Sigmoid colon (tissue), 7 donors: ENCODE measurements at regions of chr10 and their contacts with region 1.

Region 1: GRCh38 chr10:16436758-16437539 is at the start of gene PTER:
- DNase-seq: peak; percentile 97
- H3K4me3 ChIP-seq: peak within 1 kb of the TSS; percentile 51 to 67 (median 61)
- H3K27ac ChIP-seq: peak within 1 kb of the TSS; percentile 75 to 83 (median 79)
- H3K4me1 ChIP-seq: peaks cover 0 to 18% (median 11%) of the 10 kb centered on the region in 4 donors
- H3K27me3 ChIP-seq: no peaks in the 10 kb centered on the region
- CTCF ChIP-seq: no peak
- EP300 ChIP-seq: no peak
- POLR2A ChIP-seq: peak in 1 of 2 donors; percentile 56
- total RNA-seq, gene PTER: 6.1 to 14.3 (median 10.3) TPM

Region 2: DNA sequence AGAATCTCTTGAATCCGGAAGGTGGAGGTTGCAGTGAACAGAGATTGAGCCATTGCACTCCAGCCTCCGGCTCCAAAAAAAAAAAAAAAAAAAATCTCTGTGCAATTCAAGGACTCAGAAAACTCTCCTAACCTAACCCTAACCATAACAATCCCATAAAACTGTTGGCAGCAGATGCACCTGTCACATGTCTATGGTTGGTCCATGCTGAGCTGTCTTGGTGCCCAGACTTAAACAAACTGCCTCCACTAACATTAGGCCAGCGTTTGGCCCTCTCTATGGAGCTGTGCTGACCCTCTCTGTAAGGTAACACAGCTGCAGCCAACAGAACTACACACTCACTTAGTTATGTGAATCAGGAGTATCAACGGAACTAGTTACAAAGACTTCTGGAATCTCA is 132.6 kb before region 1 on chr10:
- intact Hi-C with region 1: loop called (anchors 5 kb)
- DNase-seq: peak; percentile 81
- H3K4me3 ChIP-seq: no peak overlapping the region
- H3K27ac ChIP-seq: no peak overlapping the region
- H3K4me1 ChIP-seq: peaks cover 0 to 8% (median 3%) of the 10 kb centered on the region in 4 donors
- H3K27me3 ChIP-seq: no peaks in the 10 kb centered on the region
- CTCF ChIP-seq: no peak
- EP300 ChIP-seq: no peak
- POLR2A ChIP-seq: no peak

Region 3: DNA sequence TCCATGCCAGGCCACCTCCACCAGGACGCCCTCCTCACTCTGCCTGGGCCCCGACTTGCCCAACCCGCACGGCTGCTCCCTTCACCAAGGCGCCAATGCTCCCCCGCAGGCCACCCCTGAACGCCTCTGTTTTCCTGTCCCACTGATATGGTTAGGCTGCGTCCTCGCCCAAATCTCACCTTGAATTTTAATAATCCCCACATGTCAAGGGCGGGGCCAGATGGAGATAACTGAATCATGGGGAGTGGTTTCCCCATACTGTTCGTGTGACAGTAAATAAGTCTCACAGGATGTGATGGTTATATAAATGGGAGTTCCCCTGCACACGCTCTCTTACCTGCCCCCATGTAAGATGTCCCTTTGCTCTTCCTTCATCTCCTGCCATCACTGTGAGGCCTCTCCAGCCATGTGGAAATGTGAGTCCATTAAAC is 350.4 kb after region 1 on chr10:
- intact Hi-C with region 1: no loop called
- DNase-seq: no peak
- H3K4me3 ChIP-seq: no peak overlapping the region
- H3K27ac ChIP-seq: no peak overlapping the region
- H3K4me1 ChIP-seq: peaks cover 0 to 4% (median 3%) of the 10 kb centered on the region in 4 donors
- H3K27me3 ChIP-seq: no peaks in the 10 kb centered on the region
- CTCF ChIP-seq: no peak
- EP300 ChIP-seq: no peak
- POLR2A ChIP-seq: no peak

Region 4: DNA sequence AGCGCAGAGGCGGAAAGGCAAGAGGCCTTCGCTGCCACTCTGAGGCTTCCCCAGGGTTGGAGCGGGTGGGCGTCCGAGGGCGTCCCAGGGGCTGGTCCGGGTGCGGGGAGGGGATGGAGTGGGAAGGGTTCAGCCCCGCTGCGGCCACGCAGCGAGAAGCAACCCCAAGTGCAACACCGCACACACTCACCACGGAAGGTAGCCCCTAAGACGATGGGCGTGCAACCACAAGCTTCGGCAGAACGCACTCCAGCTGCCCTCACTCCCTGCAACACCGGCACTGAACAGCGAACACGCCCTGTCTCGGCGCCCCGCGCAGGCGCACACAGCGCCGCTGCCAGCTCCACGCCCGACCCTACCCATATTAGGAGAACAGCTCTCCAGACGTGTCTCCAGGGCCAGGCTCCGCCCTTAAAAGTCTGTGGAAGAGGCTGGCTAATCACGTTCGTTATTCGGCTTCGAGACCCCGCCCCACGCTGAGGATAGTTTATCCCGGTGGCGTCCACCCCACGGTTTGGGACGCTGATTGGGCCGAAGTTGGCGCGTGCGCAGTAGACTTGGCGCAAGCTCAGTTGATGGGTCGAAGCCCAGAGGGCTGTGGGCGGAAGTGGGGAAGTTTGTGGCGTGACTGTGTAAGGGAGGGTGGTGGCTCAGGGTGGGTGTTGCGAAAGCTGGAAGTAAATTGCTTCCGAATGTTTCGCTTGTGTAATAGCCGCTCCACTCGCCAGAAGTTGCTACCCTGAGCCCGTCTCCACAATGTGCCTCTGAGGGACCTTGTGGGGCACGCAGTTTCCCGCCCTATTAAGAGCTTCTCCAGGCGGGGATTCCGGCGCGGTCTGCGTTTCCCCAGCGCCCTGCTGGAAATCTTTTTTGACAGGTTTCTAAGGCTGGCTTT is 380.4 kb after region 1 on chr10 and contains the start of gene RSU1:
- intact Hi-C with region 1: loop called (anchors 2 kb)
- DNase-seq: peak; percentile 100
- H3K4me3 ChIP-seq: peak within 1 kb of the TSS; percentile 57 to 92 (median 80)
- H3K27ac ChIP-seq: peak within 1 kb of the TSS; percentile 89 to 97 (median 92)
- H3K4me1 ChIP-seq: peaks cover 0 to 29% (median 28%) of the 10 kb centered on the region in 4 donors
- H3K27me3 ChIP-seq: no peaks in the 10 kb centered on the region
- CTCF ChIP-seq: no peak
- EP300 ChIP-seq: peak in 1 of 4 donors; percentile 18
- POLR2A ChIP-seq: peak; percentile 58 to 62
- total RNA-seq, gene RSU1: 50.3 to 94.7 (median 74.6) TPM